ENCODE measurements at regions of chr7 and their contacts with region 1.

Region 1: DNA sequence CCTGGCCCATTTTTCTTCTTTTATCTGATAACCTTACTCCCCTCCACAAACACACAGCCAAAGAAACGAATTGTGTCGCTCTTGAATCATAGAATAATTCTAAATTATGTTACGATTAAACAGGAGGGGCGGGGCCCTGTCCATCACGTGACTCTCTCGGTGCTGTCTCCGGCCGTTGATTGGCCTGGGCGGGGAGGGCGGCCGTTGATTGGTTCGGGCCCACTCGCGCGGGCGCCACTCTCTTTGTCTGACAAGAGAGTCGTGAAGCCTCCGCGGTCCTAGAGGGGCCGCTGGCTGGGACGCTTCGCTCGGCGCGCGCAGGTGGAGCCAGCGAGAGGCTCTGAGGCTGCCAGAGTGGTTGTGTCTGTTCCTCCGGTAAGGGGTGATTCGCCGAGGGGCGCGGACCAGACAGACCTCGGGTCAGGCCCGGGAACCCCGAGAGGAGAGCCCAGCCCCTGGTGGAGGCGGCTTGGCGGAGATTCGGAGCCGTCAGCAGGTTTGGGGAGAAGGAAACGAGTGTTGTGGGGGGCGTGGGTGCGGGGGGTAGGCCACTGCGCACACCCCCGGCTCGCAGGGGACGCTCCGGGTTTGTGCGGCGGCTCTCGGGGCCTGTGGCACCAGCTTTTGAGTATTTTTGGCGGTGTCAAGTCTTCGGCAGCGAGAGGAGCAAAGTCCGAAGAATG is at the start of gene ZNF789:
- DNase-seq: peak; percentile 99
- ATAC-seq: peak; percentile 97
- H3K4me3 Mint-ChIP-seq: peak within 1 kb of the TSS; percentile 91
- H3K27ac Mint-ChIP-seq: peak within 1 kb of the TSS; percentile 96
- H3K4me1 Mint-ChIP-seq: peaks cover 29% of the 10 kb centered on the region
- H3K27me3 Mint-ChIP-seq: no peaks in the 10 kb centered on the region
- total RNA-seq, gene ZNF789: 18.2 to 18.9 TPM

Region 2: DNA sequence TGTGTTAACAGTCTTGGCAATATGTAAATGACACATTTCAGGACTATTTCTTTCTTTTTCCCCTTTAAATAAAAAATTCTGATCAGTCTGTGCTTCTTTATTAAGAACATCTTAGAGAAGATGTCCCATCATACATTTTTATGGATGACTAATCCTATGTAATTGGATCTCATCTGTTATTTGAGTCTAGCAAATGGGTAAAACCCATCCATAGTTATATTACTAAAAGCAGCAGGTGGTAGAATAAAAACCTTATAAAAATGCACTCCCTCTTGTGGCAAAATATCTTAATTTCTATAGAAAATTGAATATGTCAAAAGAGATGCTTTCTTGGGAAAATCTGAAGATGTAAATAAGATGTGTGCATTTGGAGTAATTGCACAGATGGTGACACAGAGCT is 559.1 kb before region 1 on chr7:
- CTCF ChIA-PET with region 1: no interaction called
- POLR2A ChIA-PET with region 1: interaction called, 11 read pairs
- intact Hi-C with region 1: no loop called
- DNase-seq: no peak
- ATAC-seq: no peak
- H3K4me3 Mint-ChIP-seq: no peak overlapping the region
- H3K27ac Mint-ChIP-seq: no peak overlapping the region
- H3K4me1 Mint-ChIP-seq: no peaks in the 10 kb centered on the region
- H3K27me3 Mint-ChIP-seq: no peaks in the 10 kb centered on the region

Region 3: DNA sequence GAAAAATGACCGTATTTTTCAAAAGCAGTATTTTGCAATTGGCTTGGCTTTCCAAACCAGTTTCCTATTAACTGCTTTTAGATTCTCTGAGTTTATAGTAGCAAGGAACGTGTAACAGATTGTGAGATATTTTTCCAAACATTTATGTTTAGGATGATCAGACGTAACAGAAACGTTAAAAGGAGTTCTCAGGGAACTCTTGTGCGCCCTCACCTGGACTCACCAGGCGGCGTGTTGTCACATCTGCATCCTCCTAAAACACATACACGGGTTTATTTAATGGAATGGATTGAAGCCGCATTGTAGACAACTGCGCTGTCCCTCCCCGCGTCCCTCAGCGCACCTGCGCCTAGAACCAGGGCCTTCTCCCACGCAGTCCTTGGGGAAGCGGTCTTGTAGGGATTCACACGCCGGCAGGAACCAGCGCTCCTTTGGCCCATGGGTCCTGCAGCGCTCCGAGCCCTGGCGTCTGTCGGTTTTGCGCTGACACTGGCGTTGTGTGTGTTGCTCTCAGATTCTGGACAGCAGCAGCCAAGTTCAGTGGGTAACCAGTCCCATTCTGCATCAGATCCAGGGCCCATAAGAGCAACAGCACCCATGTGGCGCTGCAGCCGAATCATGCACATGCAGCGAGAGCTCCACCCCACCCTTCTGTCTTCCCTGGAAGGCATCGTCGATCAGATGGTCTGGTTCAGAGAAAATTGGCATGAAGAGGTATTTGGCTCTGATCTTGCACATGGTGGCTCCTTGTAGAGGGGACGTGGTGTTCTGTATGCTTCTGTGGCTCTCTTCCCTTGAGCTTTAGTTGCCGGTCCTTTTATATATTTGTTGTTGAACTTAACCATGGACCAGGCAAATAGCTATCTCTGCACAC is 479.4 kb before region 1 on chr7:
- CTCF ChIA-PET with region 1: no interaction called
- POLR2A ChIA-PET with region 1: no interaction called
- intact Hi-C with region 1: no loop called
- DNase-seq: no peak
- ATAC-seq: no peak
- H3K4me3 Mint-ChIP-seq: no peak overlapping the region
- H3K27ac Mint-ChIP-seq: no peak overlapping the region
- H3K4me1 Mint-ChIP-seq: peaks cover 6% of the 10 kb centered on the region
- H3K27me3 Mint-ChIP-seq: no peaks in the 10 kb centered on the region

Region 4: DNA sequence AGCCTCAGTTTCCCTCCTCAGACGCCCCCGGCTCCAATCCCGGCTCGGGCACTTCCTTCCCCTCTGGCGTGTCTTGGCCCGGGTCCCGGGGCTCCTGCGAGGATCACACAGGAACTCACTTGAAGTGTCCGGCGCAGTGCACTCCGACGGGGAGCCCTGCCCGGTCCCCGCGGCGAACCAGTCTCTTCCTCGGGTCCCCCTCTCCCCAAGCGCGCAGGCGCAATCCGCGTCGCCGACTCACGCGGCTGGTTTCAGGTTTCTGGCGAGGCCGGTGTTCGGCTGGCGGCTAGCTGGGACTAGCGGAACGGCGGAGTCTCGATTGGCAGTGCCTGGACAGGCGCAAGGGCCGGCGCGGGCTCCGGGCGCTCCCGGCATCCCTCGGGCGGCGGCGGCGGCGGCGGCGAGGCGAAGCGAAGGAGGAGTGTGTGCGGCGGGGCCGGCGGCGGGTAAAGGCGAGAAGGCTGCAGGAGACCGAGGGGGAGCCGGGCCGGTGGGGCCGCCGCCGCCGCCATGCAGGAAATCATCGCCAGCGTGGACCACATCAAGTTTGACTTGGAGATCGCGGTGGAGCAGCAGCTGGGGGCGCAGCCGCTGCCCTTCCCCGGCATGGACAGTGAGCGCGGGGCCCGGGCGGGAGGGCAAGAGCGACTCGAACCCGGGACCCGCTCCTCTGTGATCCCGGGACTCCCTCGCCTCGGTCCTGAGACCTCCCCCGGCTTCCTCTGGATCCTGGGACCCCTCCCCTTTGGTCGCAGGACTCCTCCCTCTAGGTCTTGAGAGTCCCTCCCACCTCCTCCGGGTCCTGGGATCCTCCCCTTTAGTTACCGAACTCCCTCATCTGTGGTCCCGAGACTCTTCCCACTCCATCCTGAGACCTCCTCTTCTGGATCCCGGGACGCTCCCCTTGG is 33.9 kb before region 1 on chr7 and contains the starts of genes CPSF4 and PTCD1:
- CTCF ChIA-PET with region 1: no interaction called
- POLR2A ChIA-PET with region 1: interaction called, 5 read pairs
- intact Hi-C with region 1: loop called in 1 of 2 experiments (anchors 2 kb)
- DNase-seq: peak; percentile 96
- ATAC-seq: peak; percentile 93
- H3K4me3 Mint-ChIP-seq: peak within 1 kb of the TSS; percentile 91
- H3K27ac Mint-ChIP-seq: peak within 1 kb of the TSS; percentile 98
- H3K4me1 Mint-ChIP-seq: peaks cover 36% of the 10 kb centered on the region
- H3K27me3 Mint-ChIP-seq: no peaks in the 10 kb centered on the region
- total RNA-seq, gene CPSF4: 56.1 to 57.9 TPM
- total RNA-seq, gene PTCD1: 4.7 to 7.7 TPM

Region 5: GRCh38 chr7:99539213-99539811 is 66.6 kb after region 1 on chr7:
- CTCF ChIA-PET with region 1: no interaction called
- POLR2A ChIA-PET with region 1: no interaction called
- intact Hi-C with region 1: no loop called
- DNase-seq: no peak
- ATAC-seq: no peak
- H3K4me3 Mint-ChIP-seq: no peak overlapping the region
- H3K27ac Mint-ChIP-seq: no peak overlapping the region
- H3K4me1 Mint-ChIP-seq: no peaks in the 10 kb centered on the region
- H3K27me3 Mint-ChIP-seq: no peaks in the 10 kb centered on the region

Region 6: GRCh38 chr7:99551767-99552463 is 79.2 kb after region 1 on chr7 and contains the start of gene FAM200A:
- CTCF ChIA-PET with region 1: no interaction called
- POLR2A ChIA-PET with region 1: no interaction called
- intact Hi-C with region 1: loop called in 1 of 2 experiments (anchors 1 kb)
- DNase-seq: peak; percentile 92
- ATAC-seq: peak; percentile 99
- H3K4me3 Mint-ChIP-seq: peak within 1 kb of the TSS; percentile 75
- H3K27ac Mint-ChIP-seq: peak within 1 kb of the TSS; percentile 62
- H3K4me1 Mint-ChIP-seq: peaks cover 30% of the 10 kb centered on the region
- H3K27me3 Mint-ChIP-seq: no peaks in the 10 kb centered on the region
- total RNA-seq, gene FAM200A: 4.9 to 5.5 TPM

Region 7: DNA sequence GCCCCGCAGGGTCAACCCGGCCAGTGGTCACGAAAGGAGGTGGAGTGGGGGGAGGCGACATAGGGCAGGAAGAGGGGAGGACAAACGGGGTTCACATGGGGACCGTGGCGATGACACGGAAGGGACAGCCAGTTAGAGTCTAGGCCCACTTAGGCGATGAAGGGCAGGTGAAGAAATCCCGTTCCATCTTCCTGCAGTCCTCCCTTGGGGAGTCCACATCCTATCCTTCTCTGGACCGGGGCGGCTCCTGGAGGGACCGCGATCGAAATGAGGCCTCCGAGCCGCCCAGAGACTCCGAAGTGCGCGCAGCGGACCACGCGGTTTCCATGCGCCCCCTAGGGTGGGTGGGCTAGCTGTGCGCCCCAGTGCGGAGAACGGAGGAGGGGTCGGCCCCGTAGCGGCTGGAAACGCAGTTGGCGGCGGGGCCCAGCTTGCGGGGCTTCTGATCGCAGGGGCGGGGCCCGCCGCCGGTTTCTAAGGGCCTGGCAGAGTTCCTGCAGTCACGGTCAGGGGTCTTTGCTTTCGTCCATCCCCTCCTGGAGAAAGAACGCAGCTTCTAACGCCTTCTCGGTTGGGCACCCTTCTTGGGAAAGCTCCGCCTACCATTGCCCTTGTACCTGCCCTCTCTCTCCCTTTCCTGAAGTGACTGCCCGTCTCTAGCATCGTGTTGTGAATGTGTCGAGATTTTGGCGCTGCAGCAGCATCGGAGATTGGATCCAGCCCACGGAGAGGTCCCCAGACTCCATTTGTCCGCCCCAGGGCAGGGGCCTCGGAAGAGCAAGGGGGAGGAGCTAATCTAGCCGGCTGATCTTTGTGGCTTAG is 107.5 kb after region 1 on chr7:
- CTCF ChIA-PET with region 1: interaction called, 3 read pairs
- POLR2A ChIA-PET with region 1: interaction called, 6 read pairs
- intact Hi-C with region 1: loop called in 1 of 2 experiments (anchors 1 kb)
- DNase-seq: peak; percentile 75
- ATAC-seq: peak; percentile 78
- H3K4me3 Mint-ChIP-seq: peak overlapping the region; percentile 70
- H3K27ac Mint-ChIP-seq: peak overlapping the region; percentile 73
- H3K4me1 Mint-ChIP-seq: peaks cover 19% of the 10 kb centered on the region
- H3K27me3 Mint-ChIP-seq: no peaks in the 10 kb centered on the region

Region 8: DNA sequence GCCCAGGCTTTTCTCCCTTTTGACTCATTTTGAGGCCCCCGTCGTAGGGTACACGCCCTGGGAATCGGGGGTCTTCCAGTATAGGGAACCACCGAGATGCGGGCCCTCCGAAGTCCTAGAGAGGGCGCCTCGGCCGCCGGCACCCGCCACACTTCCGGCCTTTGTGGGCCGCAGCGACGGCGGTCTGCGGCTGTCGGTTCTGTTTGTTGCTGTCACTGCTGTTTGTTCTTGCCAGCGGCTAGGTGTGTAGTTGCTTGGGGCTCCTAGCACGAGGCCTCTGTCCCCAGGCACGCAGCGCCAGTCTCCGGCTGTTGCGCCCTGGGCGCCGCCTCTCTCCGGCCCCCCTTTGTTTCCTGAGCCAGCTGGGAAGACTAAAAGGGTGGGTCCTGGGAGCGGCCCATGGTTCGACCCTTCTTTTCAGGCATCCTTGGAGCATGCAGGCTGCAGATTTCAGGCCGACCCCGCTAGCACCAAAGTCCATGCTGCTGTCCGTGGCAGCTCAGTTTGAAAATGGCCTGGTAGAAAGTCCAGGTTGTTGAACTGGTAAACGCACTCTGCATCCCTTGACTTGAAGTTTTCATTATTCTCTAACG is 524.9 kb after region 1 on chr7:
- CTCF ChIA-PET with region 1: no interaction called
- POLR2A ChIA-PET with region 1: interaction called, 13 read pairs
- intact Hi-C with region 1: no loop called
- DNase-seq: peak; percentile 81
- ATAC-seq: peak; percentile 87
- H3K4me3 Mint-ChIP-seq: peak overlapping the region; percentile 67
- H3K27ac Mint-ChIP-seq: peak overlapping the region; percentile 89
- H3K4me1 Mint-ChIP-seq: peaks cover 15% of the 10 kb centered on the region
- H3K27me3 Mint-ChIP-seq: peaks cover 1% of the 10 kb centered on the region

Measured in activated CD4-positive, alpha-beta T cell treated with anti-CD3 and anti-CD28 coated beads for 36 hours (primary cell).